Colonic mucosa (tissue), 4 donors: ENCODE measurements at regions of chr11 and their contacts with region 1.

Region 1: GRCh38 chr11:134393638-134394037 is 18.4 kb downstream of the B3GAT1 start:
- DNase-seq: peak; percentile 20
- H3K4me3 ChIP-seq: no peak overlapping the region
- H3K27ac ChIP-seq: no peak overlapping the region
- H3K4me1 ChIP-seq: no peaks in the 10 kb centered on the region
- H3K27me3 ChIP-seq: no peaks in the 10 kb centered on the region
- CTCF ChIP-seq: peak; percentile 24

Region 2: GRCh38 chr11:134132793-134133192 is 260.8 kb before region 1 on chr11:
- intact Hi-C with region 1: no loop called
- DNase-seq: no peak
- H3K4me3 ChIP-seq: no peak overlapping the region
- H3K27ac ChIP-seq: no peak overlapping the region
- H3K4me1 ChIP-seq: no peaks in the 10 kb centered on the region
- H3K27me3 ChIP-seq: no peaks in the 10 kb centered on the region
- CTCF ChIP-seq: no peak

Region 3: DNA sequence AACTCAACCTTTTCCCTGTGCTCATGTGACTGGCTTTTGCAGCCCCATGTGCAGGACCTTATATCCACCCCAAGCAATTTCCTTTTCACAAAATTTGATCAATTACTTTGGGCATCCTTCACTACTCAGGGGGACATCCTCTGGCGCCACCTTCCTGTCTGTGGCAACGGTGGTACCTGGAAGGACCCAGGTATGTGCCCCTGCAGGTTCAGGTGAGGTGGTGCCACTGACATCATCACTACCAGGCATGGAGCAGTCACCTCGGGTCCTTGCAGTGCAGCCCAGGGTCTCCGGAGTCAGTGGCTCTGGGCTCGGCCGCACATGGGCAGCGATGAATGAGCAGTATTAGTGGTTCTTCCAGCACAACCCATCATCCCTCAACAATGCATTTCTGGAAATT is 56.1 kb after region 1 on chr11:
- intact Hi-C with region 1: no loop called
- DNase-seq: no peak
- H3K4me3 ChIP-seq: no peak overlapping the region
- H3K27ac ChIP-seq: no peak overlapping the region
- H3K4me1 ChIP-seq: no peaks in the 10 kb centered on the region
- H3K27me3 ChIP-seq: no peaks in the 10 kb centered on the region
- CTCF ChIP-seq: no peak

Region 4: DNA sequence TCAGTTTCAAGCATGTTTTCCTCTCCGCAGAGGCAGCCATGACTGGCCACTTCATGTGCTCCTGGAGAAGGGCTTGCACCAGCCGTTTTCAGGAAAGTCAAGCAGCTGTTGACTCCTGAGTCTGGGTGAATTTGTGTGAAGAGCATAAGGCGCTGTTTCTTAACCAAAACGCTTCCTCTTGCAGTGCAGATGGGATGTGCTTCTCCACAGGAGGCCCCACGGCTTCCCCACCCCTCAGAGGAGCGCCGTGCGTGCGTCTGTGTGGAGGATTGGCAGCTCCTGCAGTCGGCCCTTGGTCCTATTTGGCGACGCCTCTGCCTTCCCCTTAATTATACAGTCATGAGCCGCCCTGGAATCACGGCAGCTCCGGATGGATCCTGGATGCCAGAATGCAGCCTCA is 72.5 kb after region 1 on chr11:
- intact Hi-C with region 1: no loop called
- DNase-seq: peak; percentile 72
- H3K4me3 ChIP-seq: peak overlapping the region; percentile 20
- H3K27ac ChIP-seq: peak overlapping the region; percentile 83
- H3K4me1 ChIP-seq: peaks cover 9% of the 10 kb centered on the region
- H3K27me3 ChIP-seq: no peaks in the 10 kb centered on the region
- CTCF ChIP-seq: no peak

Region 5: GRCh38 chr11:134578807-134579723 is 185.4 kb after region 1 on chr11:
- intact Hi-C with region 1: loop called (anchors 5 kb)
- DNase-seq: no peak
- H3K4me3 ChIP-seq: no peak overlapping the region
- H3K27ac ChIP-seq: no peak overlapping the region
- H3K4me1 ChIP-seq: no peaks in the 10 kb centered on the region
- H3K27me3 ChIP-seq: no peaks in the 10 kb centered on the region
- CTCF ChIP-seq: peak; percentile 24